CD14-positive monocyte (primary cell): ENCODE measurements at regions of chr17 and their contacts with region 1.

Region 1: GRCh38 chr17:27245230-27245696 is 48.7 kb upstream of the WSB1 start:
- DNase-seq: peak; percentile 60 to 81 (median 75)
- H3K4me3 ChIP-seq: peak overlapping the region in 1 of 3 experiments; percentile 62
- H3K4me3 Mint-ChIP-seq: peak overlapping the region; percentile 58 to 91
- H3K27ac ChIP-seq: peak overlapping the region; percentile 93 to 96
- H3K27ac Mint-ChIP-seq: peak overlapping the region; percentile 99 to 100 (median 100)
- H3K4me1 ChIP-seq: peaks cover 74 to 75% of the 10 kb centered on the region in 2 donors
- H3K4me1 Mint-ChIP-seq: peaks cover 72% of the 10 kb centered on the region
- H3K27me3 ChIP-seq: no peaks in the 10 kb centered on the region
- H3K27me3 Mint-ChIP-seq: peaks cover 0 to 2% (median 0%) of the 10 kb centered on the region in 3 donors
- CTCF ChIP-seq: peak; percentile 59

Region 2: GRCh38 chr17:27206447-27206846 is 38.8 kb before region 1 on chr17:
- intact Hi-C with region 1: no loop called
- DNase-seq: peak in 2 of 3 donors; percentile 49 to 55
- H3K4me3 ChIP-seq: no peak overlapping the region
- H3K4me3 Mint-ChIP-seq: no peak overlapping the region
- H3K27ac ChIP-seq: peak overlapping the region in 1 of 2 donors; percentile 51
- H3K27ac Mint-ChIP-seq: peak overlapping the region in 6 of 7 donors; percentile 25 to 89 (median 70)
- H3K4me1 ChIP-seq: peaks cover 16 to 19% of the 10 kb centered on the region in 2 donors
- H3K4me1 Mint-ChIP-seq: peaks cover 19% of the 10 kb centered on the region
- H3K27me3 ChIP-seq: no peaks in the 10 kb centered on the region
- H3K27me3 Mint-ChIP-seq: peaks cover 0 to 6% (median 0%) of the 10 kb centered on the region in 3 donors
- CTCF ChIP-seq: peak; percentile 46

Region 3: DNA sequence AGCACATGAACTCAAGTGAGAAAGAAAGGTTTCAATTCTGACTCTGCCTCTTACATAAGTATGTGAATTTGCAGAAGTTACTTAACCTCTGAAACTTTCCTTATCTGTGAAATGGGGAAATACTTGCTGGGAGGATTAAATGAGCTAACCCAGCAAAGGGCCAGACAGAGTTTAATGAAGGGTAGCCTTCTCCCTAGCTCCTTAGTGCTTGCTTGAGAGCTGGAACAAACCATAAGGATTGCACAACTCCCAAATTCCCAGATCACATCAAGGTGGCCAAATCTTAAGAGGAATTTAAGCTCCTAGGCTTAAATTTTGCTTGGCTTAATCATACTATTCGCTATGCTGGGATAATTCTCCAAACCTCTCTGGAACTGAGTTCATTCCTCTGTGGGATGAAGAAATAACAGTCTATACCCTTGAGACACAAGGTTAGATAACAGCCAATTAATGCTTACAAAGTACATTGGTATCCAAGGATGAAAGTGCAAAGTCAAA is 36.8 kb after region 1 on chr17:
- intact Hi-C with region 1: loop called (anchors 5 kb)
- DNase-seq: peak; percentile 58 to 88 (median 84)
- H3K4me3 ChIP-seq: peak overlapping the region in 1 of 3 experiments; percentile 63
- H3K4me3 Mint-ChIP-seq: peak overlapping the region; percentile 66 to 68
- H3K27ac ChIP-seq: peak overlapping the region; percentile 76 to 87
- H3K27ac Mint-ChIP-seq: peak overlapping the region; percentile 94 to 99 (median 98)
- H3K4me1 ChIP-seq: peaks cover 76 to 80% of the 10 kb centered on the region in 2 donors
- H3K4me1 Mint-ChIP-seq: peaks cover 72% of the 10 kb centered on the region
- H3K27me3 ChIP-seq: no peaks in the 10 kb centered on the region
- H3K27me3 Mint-ChIP-seq: no peaks in the 10 kb centered on the region
- CTCF ChIP-seq: no peak

Region 4: GRCh38 chr17:27293898-27294688 is 48.8 kb after region 1 on chr17 and contains the start of gene WSB1:
- intact Hi-C with region 1: loop called in 1 of 2 experiments (anchors 5 kb)
- DNase-seq: peak; percentile 92 to 95 (median 92)
- H3K4me3 ChIP-seq: peak within 1 kb of the TSS; percentile 68 to 98 (median 95)
- H3K4me3 Mint-ChIP-seq: peak within 1 kb of the TSS; percentile 99 to 100
- H3K27ac ChIP-seq: peak within 1 kb of the TSS; percentile 98 to 99
- H3K27ac Mint-ChIP-seq: peak within 1 kb of the TSS; percentile 98 to 100 (median 100)
- H3K4me1 ChIP-seq: peaks cover 44 to 49% of the 10 kb centered on the region in 2 donors
- H3K4me1 Mint-ChIP-seq: peaks cover 38% of the 10 kb centered on the region
- H3K27me3 ChIP-seq: no peaks in the 10 kb centered on the region
- H3K27me3 Mint-ChIP-seq: peaks cover 0 to 2% (median 0%) of the 10 kb centered on the region in 3 donors
- CTCF ChIP-seq: no peak
- polyA plus RNA-seq, gene WSB1: 220 to 368 (median 296) TPM

Region 5: DNA sequence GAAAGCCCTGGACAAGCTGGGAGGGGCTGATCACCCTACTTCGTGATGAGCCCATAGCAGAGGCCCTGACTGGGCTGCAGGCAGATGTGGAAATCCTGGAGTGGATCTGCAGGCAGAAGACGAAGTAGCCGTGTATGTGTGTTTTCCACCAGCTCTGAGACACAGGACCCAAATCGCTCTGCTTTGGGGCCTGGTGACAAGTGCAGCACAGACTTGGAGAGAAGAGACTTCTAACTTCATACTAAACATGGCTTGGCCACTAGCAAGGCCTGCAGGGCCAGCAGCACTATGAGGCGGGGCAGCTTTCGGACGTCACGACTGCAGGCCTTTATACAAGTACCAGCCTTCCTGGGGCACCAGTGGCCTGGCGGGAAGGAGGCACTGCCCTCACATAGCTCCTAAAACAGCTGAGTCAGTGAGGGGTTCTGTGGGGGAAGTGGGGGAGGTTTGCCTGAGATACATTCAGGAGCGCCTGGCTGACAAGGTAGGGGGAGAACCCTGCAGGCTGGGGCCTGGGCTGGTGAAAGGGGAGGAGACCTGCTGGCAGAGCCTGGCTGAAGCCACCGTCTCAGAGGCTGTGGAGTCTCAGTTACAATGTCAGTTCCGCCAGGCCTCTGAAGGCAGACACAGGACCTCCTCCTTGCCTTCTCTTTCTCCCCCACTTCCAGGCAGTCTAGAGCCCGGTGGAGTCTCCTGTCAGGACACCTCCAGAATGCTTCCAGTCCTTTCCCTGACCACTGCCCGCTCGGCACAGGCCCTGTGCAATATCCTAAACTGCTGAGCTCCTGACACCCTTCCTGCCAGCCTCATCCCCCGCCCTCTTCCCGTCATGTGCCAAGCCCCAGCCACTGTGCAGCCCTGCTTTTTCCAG is 122.1 kb after region 1 on chr17:
- intact Hi-C with region 1: no loop called
- DNase-seq: peak in 1 of 3 donors; percentile 15
- H3K4me3 ChIP-seq: no peak overlapping the region
- H3K4me3 Mint-ChIP-seq: peak overlapping the region in 1 of 2 donors; percentile 12
- H3K27ac ChIP-seq: no peak overlapping the region
- H3K27ac Mint-ChIP-seq: peak overlapping the region in 4 of 7 donors; percentile 8 to 74 (median 55)
- H3K4me1 ChIP-seq: peaks cover 0 to 9% of the 10 kb centered on the region in 2 donors
- H3K4me1 Mint-ChIP-seq: peaks cover 16% of the 10 kb centered on the region
- H3K27me3 ChIP-seq: no peaks in the 10 kb centered on the region
- H3K27me3 Mint-ChIP-seq: peaks cover 0 to 5% (median 4%) of the 10 kb centered on the region in 3 donors
- CTCF ChIP-seq: no peak

Region 6: DNA sequence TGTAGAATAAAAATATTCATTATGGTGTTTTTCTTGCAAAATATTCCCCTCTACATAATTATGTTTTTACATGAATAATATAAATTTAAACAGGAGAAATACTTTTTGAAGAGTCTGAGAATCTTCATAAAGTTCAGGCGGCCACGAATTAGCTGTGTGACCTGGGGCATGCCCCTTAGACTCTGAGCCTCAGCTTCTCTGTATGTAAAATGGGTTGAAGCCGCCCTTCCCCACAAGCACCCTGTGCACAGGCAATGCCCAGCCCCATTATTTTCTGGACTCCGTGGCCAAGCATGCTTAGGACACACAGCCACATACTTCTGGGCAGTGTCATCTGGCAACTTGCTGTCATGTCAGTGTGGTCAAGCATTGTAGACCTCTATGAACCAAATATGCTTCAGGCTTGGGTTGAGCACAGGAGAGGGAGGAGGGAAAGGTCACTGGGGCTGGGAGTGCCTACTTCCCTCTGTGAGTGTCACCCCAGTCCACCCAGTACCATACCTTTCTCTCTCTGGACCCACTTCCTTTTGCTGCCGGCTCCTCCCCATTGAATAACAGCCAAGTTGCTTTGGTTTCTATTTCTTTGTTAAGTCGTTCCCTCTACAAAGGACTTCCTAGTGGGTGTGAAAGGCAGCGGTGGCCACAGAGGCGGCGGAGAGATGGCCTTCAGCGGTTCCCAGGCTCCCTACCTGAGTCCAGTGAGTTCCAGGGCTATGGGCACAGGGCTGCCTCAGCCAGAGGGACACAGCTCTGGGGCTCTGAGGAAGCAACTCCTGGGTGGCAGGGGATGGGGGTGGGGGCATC is 385.5 kb after region 1 on chr17 and contains the start of gene LGALS9:
- intact Hi-C with region 1: loop called in 1 of 2 experiments (anchors 10 kb)
- DNase-seq: peak; percentile 61 to 69 (median 61)
- H3K4me3 ChIP-seq: peak within 1 kb of the TSS; percentile 78 to 97 (median 89)
- H3K4me3 Mint-ChIP-seq: peak within 1 kb of the TSS; percentile 98 to 100
- H3K27ac ChIP-seq: peak within 1 kb of the TSS; percentile 83 to 84
- H3K27ac Mint-ChIP-seq: peak within 1 kb of the TSS; percentile 90 to 96 (median 94)
- H3K4me1 ChIP-seq: peaks cover 44 to 48% of the 10 kb centered on the region in 2 donors
- H3K4me1 Mint-ChIP-seq: peaks cover 50% of the 10 kb centered on the region
- H3K27me3 ChIP-seq: no peaks in the 10 kb centered on the region
- H3K27me3 Mint-ChIP-seq: peaks cover 0 to 2% (median 0%) of the 10 kb centered on the region in 3 donors
- CTCF ChIP-seq: no peak
- polyA plus RNA-seq, gene LGALS9: 149 to 581 (median 149) TPM

Region 7: GRCh38 chr17:28644985-28645939 is 1400.0 kb after region 1 on chr17 and contains the start of gene BLTP2:
- intact Hi-C with region 1: no loop called
- DNase-seq: peak; percentile 92 to 95 (median 93)
- H3K4me3 ChIP-seq: peak within 1 kb of the TSS; percentile 77 to 97 (median 89)
- H3K4me3 Mint-ChIP-seq: peak within 1 kb of the TSS; percentile 80 to 97
- H3K27ac ChIP-seq: peak within 1 kb of the TSS; percentile 83 to 96
- H3K27ac Mint-ChIP-seq: peak within 1 kb of the TSS; percentile 92 to 98 (median 96)
- H3K4me1 ChIP-seq: peaks cover 26 to 34% of the 10 kb centered on the region in 2 donors
- H3K4me1 Mint-ChIP-seq: peaks cover 31% of the 10 kb centered on the region
- H3K27me3 ChIP-seq: no peaks in the 10 kb centered on the region
- H3K27me3 Mint-ChIP-seq: peaks cover 0 to 4% (median 0%) of the 10 kb centered on the region in 3 donors
- CTCF ChIP-seq: no peak
- polyA plus RNA-seq, gene BLTP2: 46.8 to 69.2 (median 53.2) TPM